Naive thymus-derived CD4-positive, alpha-beta T cell (primary cell): ENCODE measurements at regions of chr16 and their contacts with region 1.

Region 1: GRCh38 chr16:86496929-86497381 is 13.4 kb upstream of the FOXF1 start:
- DNase-seq: no peak
- ATAC-seq: no peak
- H3K4me3 ChIP-seq: no peak overlapping the region
- H3K4me3 Mint-ChIP-seq: peak overlapping the region in 2 of 10 donors; percentile 45 to 53
- H3K27ac ChIP-seq: no peak overlapping the region
- H3K27ac Mint-ChIP-seq: peak overlapping the region in 1 of 9 donors; percentile 58
- H3K4me1 ChIP-seq: no peaks in the 10 kb centered on the region
- H3K4me1 Mint-ChIP-seq: peaks cover 0 to 8% (median 4%) of the 10 kb centered on the region in 7 donors
- H3K27me3 ChIP-seq: peaks cover 0 to 3% of the 10 kb centered on the region in 2 donors
- H3K27me3 Mint-ChIP-seq: peaks cover 58 to 91% (median 72%) of the 10 kb centered on the region in 5 donors

Region 2: GRCh38 chr16:86089991-86090390 is 407.0 kb before region 1 on chr16:
- CTCF ChIA-PET with region 1: no interaction called
- POLR2A ChIA-PET with region 1: no interaction called
- intact Hi-C with region 1: no loop called
- DNase-seq: no peak
- ATAC-seq: peak; percentile 46
- H3K4me3 ChIP-seq: no peak overlapping the region
- H3K4me3 Mint-ChIP-seq: peak overlapping the region in 1 of 10 donors; percentile 17
- H3K27ac ChIP-seq: no peak overlapping the region
- H3K27ac Mint-ChIP-seq: no peak overlapping the region
- H3K4me1 ChIP-seq: no peaks in the 10 kb centered on the region
- H3K4me1 Mint-ChIP-seq: peaks cover 0 to 20% (median 0%) of the 10 kb centered on the region in 7 donors
- H3K27me3 ChIP-seq: no peaks in the 10 kb centered on the region
- H3K27me3 Mint-ChIP-seq: peaks cover 0 to 5% (median 0%) of the 10 kb centered on the region in 5 donors

Region 3: GRCh38 chr16:86508947-86509758 is 12.2 kb after region 1 on chr16:
- CTCF ChIA-PET with region 1: no interaction called
- POLR2A ChIA-PET with region 1: no interaction called
- intact Hi-C with region 1: loop called in 1 of 2 experiments (anchors 1 kb)
- DNase-seq: peak in 1 of 9 donors; percentile 56
- ATAC-seq: no peak
- H3K4me3 ChIP-seq: peak overlapping the region; percentile 24
- H3K4me3 Mint-ChIP-seq: peak overlapping the region; percentile 74 to 91 (median 84)
- H3K27ac ChIP-seq: no peak overlapping the region
- H3K27ac Mint-ChIP-seq: peak overlapping the region in 1 of 9 donors; percentile 83
- H3K4me1 ChIP-seq: no peaks in the 10 kb centered on the region
- H3K4me1 Mint-ChIP-seq: peaks cover 11 to 41% (median 38%) of the 10 kb centered on the region in 7 donors
- H3K27me3 ChIP-seq: peaks cover 6 to 7% of the 10 kb centered on the region in 2 donors
- H3K27me3 Mint-ChIP-seq: peaks cover 61 to 75% (median 64%) of the 10 kb centered on the region in 5 donors

Region 4: DNA sequence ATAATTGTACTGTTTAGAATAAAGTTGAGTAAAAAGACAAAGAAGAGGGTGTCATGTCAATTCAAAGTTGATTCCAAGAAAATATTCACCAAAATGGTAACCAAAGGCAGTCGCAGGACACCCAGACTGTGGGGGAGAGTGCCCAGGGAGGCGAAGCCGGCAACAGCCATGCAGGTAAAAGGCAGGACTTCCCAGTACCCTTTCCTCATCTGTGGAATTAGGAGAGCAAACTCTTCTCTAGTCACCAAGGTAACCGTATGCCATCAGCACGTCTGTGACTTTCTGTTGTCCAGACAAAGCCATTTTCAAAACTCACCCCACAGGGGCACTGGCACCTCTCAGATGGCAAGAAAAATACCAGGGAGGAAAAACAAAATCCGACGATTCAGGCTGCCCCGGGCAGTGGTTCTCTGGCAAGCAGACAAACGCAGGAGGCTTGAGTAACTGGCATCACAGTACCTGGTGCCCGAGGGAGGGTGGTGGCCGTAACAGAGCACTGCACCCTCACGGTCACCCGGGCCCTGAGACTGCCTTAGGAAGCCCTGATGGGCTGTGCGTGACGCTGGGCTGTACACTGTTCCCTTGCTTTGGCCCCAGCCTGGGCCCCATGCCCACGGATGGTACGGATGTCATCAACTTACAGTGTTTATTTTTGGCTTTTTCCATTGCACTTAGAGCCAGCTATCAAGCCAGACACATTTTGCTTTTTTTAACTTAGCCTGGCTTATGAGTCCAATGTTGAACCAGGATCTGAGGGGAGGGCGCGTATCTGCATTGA is 368.8 kb after region 1 on chr16:
- CTCF ChIA-PET with region 1: no interaction called
- POLR2A ChIA-PET with region 1: no interaction called
- intact Hi-C with region 1: no loop called
- DNase-seq: no peak
- ATAC-seq: no peak
- H3K4me3 ChIP-seq: no peak overlapping the region
- H3K4me3 Mint-ChIP-seq: no peak overlapping the region
- H3K27ac ChIP-seq: no peak overlapping the region
- H3K27ac Mint-ChIP-seq: no peak overlapping the region
- H3K4me1 ChIP-seq: no peaks in the 10 kb centered on the region
- H3K4me1 Mint-ChIP-seq: no peaks in the 10 kb centered on the region
- H3K27me3 ChIP-seq: no peaks in the 10 kb centered on the region
- H3K27me3 Mint-ChIP-seq: peaks cover 0 to 17% (median 8%) of the 10 kb centered on the region in 5 donors